ENCODE measurements at regions of chr2 and their contacts with region 1.

Region 1: DNA sequence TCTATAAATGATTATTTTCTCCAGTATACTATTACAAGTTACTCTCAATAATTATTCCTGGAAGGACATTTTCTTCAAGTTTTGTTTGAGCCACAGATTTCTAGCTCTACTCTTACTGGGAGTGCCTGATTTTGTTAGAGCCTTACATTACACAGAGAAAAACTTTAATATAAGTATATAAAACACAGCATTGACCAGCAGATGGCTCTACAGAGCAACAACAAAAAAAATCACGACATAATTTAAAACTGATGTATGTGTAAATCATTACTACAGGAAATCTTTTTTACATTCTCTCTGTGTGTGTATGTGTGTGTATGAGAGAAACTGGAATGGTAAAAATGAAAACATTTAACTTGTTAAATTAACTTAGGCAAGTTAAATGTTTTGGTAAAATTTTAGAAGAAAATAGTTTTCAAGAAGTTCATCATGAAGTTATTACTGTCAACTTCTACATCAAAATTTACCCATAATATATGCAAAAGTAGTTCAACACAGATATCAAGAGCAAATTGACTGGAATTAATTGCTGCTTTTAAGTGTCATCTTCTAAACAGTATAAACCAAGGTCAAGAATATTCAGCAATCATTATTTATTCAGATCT is 103.3 kb downstream of the MDH1 start:
- DNase-seq: peak in 7 of 9 donors; percentile 18 to 61 (median 51)
- ATAC-seq: peak; percentile 74
- H3K4me3 ChIP-seq: no peak overlapping the region
- H3K4me3 Mint-ChIP-seq: no peak overlapping the region
- H3K27ac ChIP-seq: no peak overlapping the region
- H3K27ac Mint-ChIP-seq: no peak overlapping the region
- H3K4me1 ChIP-seq: no peaks in the 10 kb centered on the region
- H3K4me1 Mint-ChIP-seq: peaks cover 0 to 4% (median 0%) of the 10 kb centered on the region in 7 donors
- H3K27me3 ChIP-seq: no peaks in the 10 kb centered on the region
- H3K27me3 Mint-ChIP-seq: peaks cover 0 to 11% (median 0%) of the 10 kb centered on the region in 5 donors

Region 2: DNA sequence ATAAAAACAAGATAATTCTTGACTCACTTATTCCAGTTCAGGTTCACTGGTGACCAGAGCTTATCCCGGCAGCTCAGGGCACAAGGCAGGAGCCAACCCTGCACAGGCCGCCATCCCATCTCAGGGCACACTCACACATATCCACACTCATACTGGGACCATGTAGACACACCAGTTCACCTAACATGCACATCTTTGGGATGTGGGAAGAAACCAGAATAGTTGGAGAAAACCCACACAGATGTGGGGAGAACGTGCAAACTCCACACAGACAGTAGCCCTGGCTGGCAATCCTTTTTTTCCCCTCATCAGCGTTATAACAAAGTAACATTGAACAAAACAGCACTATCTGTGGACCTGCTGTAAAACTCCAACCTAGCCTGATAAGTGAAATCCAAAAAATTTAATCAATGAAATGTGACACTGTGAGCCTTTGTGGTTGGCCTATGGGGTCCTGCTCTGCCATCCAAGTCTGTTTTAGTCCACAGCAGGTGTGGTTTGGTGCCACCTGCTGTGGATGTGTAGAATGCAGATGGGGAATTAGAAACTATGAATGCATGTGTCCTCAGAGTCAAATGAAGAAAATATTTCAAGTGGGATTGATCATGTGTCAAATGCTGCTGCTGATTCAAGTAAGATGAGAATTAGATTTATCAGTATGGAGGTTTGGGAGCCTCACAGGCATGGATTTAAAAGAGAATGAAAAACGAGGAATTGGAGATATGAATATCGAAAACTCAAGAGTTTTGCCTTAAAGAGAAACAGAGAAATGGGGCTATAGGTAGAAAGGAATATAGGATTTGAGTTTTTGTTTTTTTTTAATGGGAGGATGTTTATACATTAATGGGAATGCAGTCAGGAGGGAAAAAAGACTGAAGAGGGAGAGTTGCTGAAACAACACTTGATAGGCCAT is 196.6 kb after region 1 on chr2:
- CTCF ChIA-PET with region 1: interaction called, 6 read pairs
- POLR2A ChIA-PET with region 1: no interaction called
- intact Hi-C with region 1: loop called (anchors 1 kb)
- DNase-seq: peak in 8 of 9 donors; percentile 16 to 44 (median 32)
- ATAC-seq: peak; percentile 81
- H3K4me3 ChIP-seq: no peak overlapping the region
- H3K4me3 Mint-ChIP-seq: no peak overlapping the region
- H3K27ac ChIP-seq: no peak overlapping the region
- H3K27ac Mint-ChIP-seq: peak overlapping the region in 7 of 9 donors; percentile 9 to 71 (median 42)
- H3K4me1 ChIP-seq: no peaks in the 10 kb centered on the region
- H3K4me1 Mint-ChIP-seq: peaks cover 0 to 8% (median 0%) of the 10 kb centered on the region in 7 donors
- H3K27me3 ChIP-seq: no peaks in the 10 kb centered on the region
- H3K27me3 Mint-ChIP-seq: no peaks in the 10 kb centered on the region

Region 3: DNA sequence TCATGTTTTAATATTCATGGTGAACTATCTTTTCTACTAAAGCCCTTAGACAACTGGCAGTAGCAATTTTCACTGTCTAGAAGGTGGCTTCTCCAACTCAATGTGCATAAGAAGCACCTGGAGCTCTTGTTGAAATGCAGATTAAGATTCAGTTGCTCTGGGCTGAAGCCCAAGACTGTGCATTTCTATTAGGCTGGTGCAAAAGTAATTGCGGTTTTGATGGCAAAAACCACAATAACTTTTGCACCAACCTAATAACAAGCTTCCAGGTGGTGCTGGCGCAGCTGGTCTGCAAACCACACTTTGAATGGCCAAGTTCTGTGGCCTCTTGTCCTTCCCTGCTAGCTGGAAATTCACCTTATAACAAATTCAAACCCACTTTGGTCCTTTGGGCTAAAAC is 353.8 kb after region 1 on chr2:
- CTCF ChIA-PET with region 1: no interaction called
- POLR2A ChIA-PET with region 1: no interaction called
- intact Hi-C with region 1: loop called in 1 of 2 experiments (anchors 5 kb)
- DNase-seq: no peak
- ATAC-seq: no peak
- H3K4me3 ChIP-seq: no peak overlapping the region
- H3K4me3 Mint-ChIP-seq: no peak overlapping the region
- H3K27ac ChIP-seq: no peak overlapping the region
- H3K27ac Mint-ChIP-seq: no peak overlapping the region
- H3K4me1 ChIP-seq: peaks cover 3 to 9% of the 10 kb centered on the region in 2 donors
- H3K4me1 Mint-ChIP-seq: peaks cover 7 to 21% (median 13%) of the 10 kb centered on the region in 7 donors
- H3K27me3 ChIP-seq: no peaks in the 10 kb centered on the region
- H3K27me3 Mint-ChIP-seq: peaks cover 0 to 2% (median 0%) of the 10 kb centered on the region in 5 donors

Region 4: DNA sequence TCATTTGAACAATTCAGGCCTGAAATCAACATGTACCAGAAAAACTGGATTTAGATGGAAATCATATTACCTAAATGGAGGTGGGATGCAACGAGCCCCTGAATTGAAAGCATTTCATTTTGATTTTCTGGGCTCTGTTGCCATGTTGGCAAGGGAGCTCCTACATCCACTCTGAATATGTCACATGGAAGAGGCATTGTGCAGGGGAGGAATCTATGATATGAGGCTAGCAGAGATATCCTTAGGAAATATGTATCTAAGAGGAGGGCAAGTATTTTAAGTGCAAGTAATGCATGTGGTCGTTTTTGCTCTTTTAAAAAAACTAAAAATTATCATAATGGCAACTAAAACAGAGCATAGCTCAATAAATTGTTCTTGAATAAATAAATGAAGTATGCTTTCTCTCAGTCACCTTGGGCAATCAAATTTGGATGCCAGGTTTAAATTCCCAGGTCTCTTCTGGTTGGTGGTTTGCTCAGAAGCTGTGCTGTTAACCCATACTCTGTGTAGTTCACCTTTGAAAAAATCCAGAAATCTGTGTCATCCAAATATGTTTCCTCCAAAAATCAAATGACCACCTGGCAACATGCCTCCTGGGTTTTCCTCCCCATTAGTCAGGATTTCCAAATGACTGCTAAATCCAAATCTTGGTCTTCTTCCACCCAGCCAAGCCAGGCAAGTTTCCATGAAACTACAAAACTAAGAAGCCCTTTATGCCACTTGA is 755.4 kb after region 1 on chr2:
- CTCF ChIA-PET with region 1: no interaction called
- POLR2A ChIA-PET with region 1: no interaction called
- intact Hi-C with region 1: no loop called
- DNase-seq: no peak
- ATAC-seq: no peak
- H3K4me3 ChIP-seq: no peak overlapping the region
- H3K4me3 Mint-ChIP-seq: no peak overlapping the region
- H3K27ac ChIP-seq: no peak overlapping the region
- H3K27ac Mint-ChIP-seq: no peak overlapping the region
- H3K4me1 ChIP-seq: no peaks in the 10 kb centered on the region
- H3K4me1 Mint-ChIP-seq: no peaks in the 10 kb centered on the region
- H3K27me3 ChIP-seq: no peaks in the 10 kb centered on the region
- H3K27me3 Mint-ChIP-seq: peaks cover 3 to 58% (median 15%) of the 10 kb centered on the region in 5 donors